Sciatic nerve (tissue), 2 donors: ENCODE measurements at regions of chr5 and their contacts with region 1.

Region 1: GRCh38 chr5:11273180-11273903 is 512.3 kb upstream of the DAP start:
- DNase-seq: no peak
- ATAC-seq: no peak

Region 2: DNA sequence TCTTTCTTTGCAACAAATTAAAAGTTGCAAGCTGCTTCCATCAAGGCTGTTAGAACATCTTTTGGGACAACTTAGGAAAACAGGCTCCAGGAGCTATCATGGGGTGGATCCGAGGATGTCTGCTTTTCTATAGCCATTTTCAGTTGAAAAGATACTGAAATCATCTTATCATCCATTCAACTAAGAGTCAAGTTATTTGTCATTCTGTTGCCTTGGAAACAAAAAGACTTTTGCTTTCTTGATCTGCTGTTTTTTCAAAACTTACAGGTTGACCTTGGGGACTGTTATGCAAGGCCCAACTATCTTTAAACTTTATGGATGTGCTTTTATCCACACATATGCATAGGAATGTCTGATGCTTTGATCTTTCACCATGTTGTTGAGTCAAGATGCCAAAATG is 33.0 kb after region 1 on chr5:
- intact Hi-C with region 1: loop called (anchors 2 kb)
- DNase-seq: no peak
- ATAC-seq: no peak

Region 3: DNA sequence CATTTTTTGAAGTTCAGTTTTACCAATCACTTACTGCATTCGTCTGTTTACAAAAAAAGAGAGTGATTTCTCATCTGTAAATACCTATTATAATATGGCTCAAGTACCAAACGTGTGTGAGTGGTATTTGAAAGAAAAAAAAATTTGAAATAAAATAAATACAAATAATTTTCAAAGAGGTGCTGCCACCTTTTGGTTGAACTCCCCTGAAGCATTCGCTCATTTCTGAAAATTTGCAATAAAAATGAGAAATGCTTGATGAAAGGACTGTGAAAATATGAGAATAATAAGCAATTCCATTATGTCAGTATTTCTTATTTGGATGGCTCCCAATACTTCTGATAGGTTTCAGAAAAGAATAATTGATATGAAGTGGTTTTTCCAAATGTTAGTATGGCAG is 221.0 kb after region 1 on chr5:
- intact Hi-C with region 1: loop called (anchors 10 kb)
- DNase-seq: no peak
- ATAC-seq: no peak